Heart right ventricle (tissue), 16 donors: ENCODE measurements at regions of chr2 and their contacts with region 1.

Region 1: DNA sequence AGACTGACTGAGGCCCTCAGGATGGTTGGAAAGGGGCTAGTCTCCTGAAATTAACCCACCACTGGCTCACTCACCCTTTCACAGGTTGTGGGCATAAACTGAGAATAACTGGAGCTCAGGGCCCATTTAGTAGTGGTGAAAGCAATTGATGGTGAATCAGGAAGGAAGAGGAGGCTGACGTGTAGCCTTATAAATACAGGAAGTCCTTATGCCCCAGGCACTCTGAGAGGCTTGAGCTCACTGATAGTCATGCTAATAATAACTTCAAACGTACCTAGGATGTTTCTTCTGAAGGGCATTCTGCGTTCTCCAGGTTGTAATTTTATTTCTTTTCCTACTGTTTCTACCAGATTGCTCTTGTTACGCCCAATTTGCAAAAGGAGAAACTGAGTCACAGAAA is 328.4 kb downstream of the CLIP4 start:
- DNase-seq: no peak
- ATAC-seq: peak in 7 of 8 donors; percentile 20 to 95 (median 82)
- H3K4me3 ChIP-seq: no peak overlapping the region
- H3K27ac ChIP-seq: peak overlapping the region in 1 of 10 donors; percentile 9
- H3K4me1 ChIP-seq: peaks cover 0 to 15% (median 0%) of the 10 kb centered on the region in 9 donors
- H3K27me3 ChIP-seq: no peaks in the 10 kb centered on the region
- CTCF ChIP-seq: no peak

Region 2: GRCh38 chr2:29398384-29399237 is 45.0 kb before region 1 on chr2:
- intact Hi-C with region 1: no loop called
- DNase-seq: no peak
- ATAC-seq: peak in 1 of 8 donors; percentile 31
- H3K4me3 ChIP-seq: no peak overlapping the region
- H3K27ac ChIP-seq: no peak overlapping the region
- H3K4me1 ChIP-seq: no peaks in the 10 kb centered on the region
- H3K27me3 ChIP-seq: peaks cover 0 to 18% (median 0%) of the 10 kb centered on the region in 7 donors
- CTCF ChIP-seq: no peak

Region 3: GRCh38 chr2:31109633-31110192 is 1666.1 kb after region 1 on chr2:
- intact Hi-C with region 1: loop called in 1 of 10 experiments (anchors 5 kb)
- DNase-seq: no peak
- ATAC-seq: no peak
- H3K4me3 ChIP-seq: no peak overlapping the region
- H3K27ac ChIP-seq: no peak overlapping the region
- H3K4me1 ChIP-seq: no peaks in the 10 kb centered on the region
- H3K27me3 ChIP-seq: peaks cover 0 to 11% (median 4%) of the 10 kb centered on the region in 7 donors
- CTCF ChIP-seq: no peak